CD4-positive, alpha-beta T cell (primary cell): ENCODE measurements at regions of chr4 and their contacts with region 1.

Region 1: DNA sequence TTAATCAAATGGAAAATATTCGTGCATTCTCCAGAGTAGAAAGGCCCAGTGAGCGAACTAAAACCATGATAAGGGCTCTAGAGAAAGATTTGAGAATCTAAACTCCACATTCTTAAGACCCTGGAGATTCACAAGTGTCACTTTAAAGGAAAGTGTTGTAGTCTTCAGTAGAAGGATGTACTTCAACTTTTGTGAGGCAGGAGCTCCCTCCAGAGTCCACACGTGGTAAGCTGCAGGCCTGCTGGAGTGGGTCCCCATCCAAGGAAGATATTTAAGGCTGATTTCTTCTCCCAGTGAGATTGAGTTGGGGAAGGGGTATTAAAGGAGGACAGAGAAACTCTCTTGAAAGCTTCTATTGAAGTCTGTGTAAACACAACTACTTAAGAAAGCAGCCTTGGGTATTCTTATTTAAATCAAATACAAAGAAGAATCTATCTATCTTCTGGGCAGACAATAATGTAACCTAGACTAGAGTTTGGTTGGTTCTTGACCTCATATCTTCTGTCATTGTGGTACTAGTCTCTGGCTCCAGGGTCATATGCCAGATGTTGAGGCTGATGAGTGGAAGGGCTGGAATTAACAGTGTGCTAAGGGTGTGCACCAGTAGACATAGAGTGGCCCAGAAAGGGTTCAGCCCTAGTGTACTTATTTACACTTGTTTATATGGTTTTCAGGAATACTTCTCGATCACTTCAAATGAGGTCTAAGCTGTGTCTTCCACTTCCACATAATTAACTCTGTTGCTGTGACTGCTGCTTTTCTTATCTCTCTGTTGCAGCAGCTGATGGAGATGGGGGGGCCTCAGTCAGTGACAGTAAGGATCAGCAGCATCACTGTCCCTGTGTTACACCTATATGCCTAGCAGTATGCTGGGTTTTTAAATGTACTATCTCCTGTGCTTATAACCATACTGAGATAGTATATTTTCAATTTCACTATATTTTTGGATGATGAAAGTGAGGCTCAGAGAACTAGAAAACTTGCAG is 76.1 kb downstream of the HMGB2 start:
- DNase-seq: peak; percentile 14 to 75 (median 50)
- ATAC-seq: peak; percentile 70
- H3K4me3 ChIP-seq: no peak overlapping the region
- H3K4me3 Mint-ChIP-seq: no peak overlapping the region
- H3K27ac ChIP-seq: no peak overlapping the region
- H3K27ac Mint-ChIP-seq: no peak overlapping the region
- H3K4me1 ChIP-seq: no peaks in the 10 kb centered on the region
- H3K4me1 Mint-ChIP-seq: peaks cover 14% of the 10 kb centered on the region
- H3K27me3 ChIP-seq: no peaks in the 10 kb centered on the region
- H3K27me3 Mint-ChIP-seq: no peaks in the 10 kb centered on the region
- CTCF ChIP-seq: peak; percentile 65

Region 2: GRCh38 chr4:173025131-173025530 is 232.9 kb before region 1 on chr4:
- CTCF ChIA-PET with region 1: interaction called, 4 read pairs
- POLR2A ChIA-PET with region 1: no interaction called
- intact Hi-C with region 1: loop called in 1 of 2 experiments (anchors 1 kb)
- DNase-seq: peak in 4 of 14 experiments; percentile 27 to 62 (median 58)
- ATAC-seq: peak; percentile 51
- H3K4me3 ChIP-seq: no peak overlapping the region
- H3K4me3 Mint-ChIP-seq: no peak overlapping the region
- H3K27ac ChIP-seq: no peak overlapping the region
- H3K27ac Mint-ChIP-seq: no peak overlapping the region
- H3K4me1 ChIP-seq: no peaks in the 10 kb centered on the region
- H3K4me1 Mint-ChIP-seq: no peaks in the 10 kb centered on the region
- H3K27me3 ChIP-seq: no peaks in the 10 kb centered on the region
- H3K27me3 Mint-ChIP-seq: peaks cover 4% of the 10 kb centered on the region
- CTCF ChIP-seq: peak; percentile 59

Region 3: GRCh38 chr4:173288296-173288695 is 30.3 kb after region 1 on chr4:
- CTCF ChIA-PET with region 1: no interaction called
- POLR2A ChIA-PET with region 1: no interaction called
- intact Hi-C with region 1: no loop called
- DNase-seq: peak; percentile 36 to 80 (median 63)
- ATAC-seq: peak; percentile 56
- H3K4me3 ChIP-seq: no peak overlapping the region
- H3K4me3 Mint-ChIP-seq: peak overlapping the region; percentile 45
- H3K27ac ChIP-seq: no peak overlapping the region
- H3K27ac Mint-ChIP-seq: peak overlapping the region; percentile 6
- H3K4me1 ChIP-seq: peaks cover 3% of the 10 kb centered on the region
- H3K4me1 Mint-ChIP-seq: peaks cover 17% of the 10 kb centered on the region
- H3K27me3 ChIP-seq: no peaks in the 10 kb centered on the region
- H3K27me3 Mint-ChIP-seq: no peaks in the 10 kb centered on the region
- CTCF ChIP-seq: peak; percentile 68